ENCODE measurements at regions of chr5 and their contacts with region 1.

Region 1: GRCh38 chr5:90529194-90529938 is at the start of gene LYSMD3:
- DNase-seq: peak; percentile 98 to 99
- ATAC-seq: peak; percentile 99 to 100 (median 99)
- H3K4me3 ChIP-seq: peak within 1 kb of the TSS; percentile 82
- H3K27ac ChIP-seq: peak within 1 kb of the TSS; percentile 88
- H3K4me1 ChIP-seq: peaks cover 25% of the 10 kb centered on the region
- H3K27me3 ChIP-seq: no peaks in the 10 kb centered on the region
- CTCF ChIP-seq: no peak
- total RNA-seq, gene LYSMD3: 13.1 to 19.9 (median 16.8) TPM

Region 2: DNA sequence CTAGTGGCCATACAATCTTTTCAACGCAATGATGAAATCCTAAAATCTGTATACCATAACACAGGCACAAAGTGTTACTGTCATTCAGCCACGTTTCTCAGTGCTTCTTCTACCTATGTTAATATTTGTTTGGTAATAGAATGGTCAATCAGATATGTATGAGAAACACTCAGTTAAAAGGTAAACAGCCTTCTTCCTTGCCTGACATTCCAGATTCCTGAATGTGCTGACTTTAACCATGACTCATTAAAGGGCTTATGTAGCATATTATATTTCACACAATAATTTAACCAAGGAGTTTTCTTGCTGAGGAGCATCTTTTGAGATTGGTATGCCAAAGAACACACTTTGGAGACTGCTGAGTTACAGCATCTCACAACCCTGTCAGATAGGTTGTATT is 307.4 kb before region 1 on chr5:
- intact Hi-C with region 1: no loop called
- DNase-seq: no peak
- ATAC-seq: no peak
- H3K4me3 ChIP-seq: no peak overlapping the region
- H3K27ac ChIP-seq: no peak overlapping the region
- H3K4me1 ChIP-seq: no peaks in the 10 kb centered on the region
- H3K27me3 ChIP-seq: no peaks in the 10 kb centered on the region
- CTCF ChIP-seq: no peak

Region 3: GRCh38 chr5:90326995-90327394 is 202.4 kb before region 1 on chr5:
- intact Hi-C with region 1: no loop called
- DNase-seq: no peak
- ATAC-seq: no peak
- H3K4me3 ChIP-seq: no peak overlapping the region
- H3K27ac ChIP-seq: no peak overlapping the region
- H3K4me1 ChIP-seq: no peaks in the 10 kb centered on the region
- H3K27me3 ChIP-seq: no peaks in the 10 kb centered on the region
- CTCF ChIP-seq: no peak

Region 4: DNA sequence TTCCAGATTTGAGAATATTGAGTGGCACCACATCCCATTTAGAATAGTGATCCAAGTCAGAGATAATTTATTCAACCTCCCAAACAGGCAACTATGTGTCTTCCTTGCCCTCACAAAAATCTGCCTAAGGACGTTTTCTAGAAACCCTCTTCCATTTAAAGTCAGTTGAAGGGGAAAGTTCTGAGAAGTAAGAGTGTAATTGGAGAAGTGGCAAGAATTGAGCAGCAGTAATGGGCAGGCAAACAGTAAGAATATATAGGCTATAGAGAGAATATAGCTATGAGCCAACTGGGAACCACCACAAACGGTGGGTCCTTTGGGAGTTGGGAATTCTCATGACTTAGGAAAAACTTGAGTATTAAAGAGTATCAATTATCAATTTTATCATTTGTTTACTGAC is 88.7 kb before region 1 on chr5:
- intact Hi-C with region 1: loop called (anchors 2 kb)
- DNase-seq: no peak
- ATAC-seq: no peak
- H3K4me3 ChIP-seq: no peak overlapping the region
- H3K27ac ChIP-seq: no peak overlapping the region
- H3K4me1 ChIP-seq: no peaks in the 10 kb centered on the region
- H3K27me3 ChIP-seq: no peaks in the 10 kb centered on the region
- CTCF ChIP-seq: no peak

Region 5: DNA sequence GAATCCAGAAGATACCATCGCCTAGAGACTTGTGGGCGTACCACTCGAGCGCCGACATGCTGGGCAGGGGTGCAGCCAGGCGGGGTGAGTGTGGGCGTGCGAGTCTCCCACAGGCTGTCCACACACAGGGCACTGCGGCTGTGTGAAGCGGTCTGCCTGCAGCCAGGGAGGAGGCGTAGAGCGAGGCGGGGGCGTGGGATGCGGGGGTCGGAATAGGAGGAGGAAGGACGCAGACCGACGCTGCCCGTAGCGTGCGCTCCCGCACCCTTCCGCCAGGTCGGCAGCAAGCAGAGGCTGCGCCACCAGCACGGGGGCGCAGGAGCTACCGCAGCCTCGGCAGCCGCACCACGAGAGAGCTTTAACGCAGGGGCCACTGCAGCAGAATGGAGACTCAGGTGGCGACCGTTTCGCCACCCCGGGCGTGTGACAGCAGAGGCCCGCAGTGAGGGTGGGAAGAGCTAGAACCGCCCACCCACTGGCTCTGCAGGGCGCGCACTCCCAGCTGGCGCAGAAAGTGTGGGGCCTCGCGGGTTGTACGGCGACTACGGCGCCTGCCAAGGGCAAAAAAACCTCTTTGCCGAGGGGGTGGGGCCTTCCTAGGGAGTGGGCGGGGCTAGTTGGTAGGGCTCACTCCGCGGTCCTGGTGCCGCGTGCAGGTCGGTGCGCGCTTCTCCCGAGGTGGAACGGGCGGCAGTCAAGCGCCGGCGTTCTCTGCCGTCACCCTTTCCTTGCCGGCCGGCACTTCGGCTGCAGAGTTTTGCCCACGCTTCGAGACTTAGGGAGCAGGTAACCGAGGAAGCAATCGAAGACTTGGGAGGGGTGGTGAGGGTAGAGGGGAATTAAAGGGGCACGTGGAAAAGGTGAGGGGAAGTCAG is 54.9 kb before region 1 on chr5 and contains the starts of genes MBLAC2 and POLR3G:
- intact Hi-C with region 1: loop called (anchors 2 to 5 kb)
- DNase-seq: peak; percentile 92 to 97
- ATAC-seq: peak; percentile 96 to 98 (median 96)
- H3K4me3 ChIP-seq: peak within 1 kb of the TSS; percentile 86
- H3K27ac ChIP-seq: peak within 1 kb of the TSS; percentile 85
- H3K4me1 ChIP-seq: peaks cover 20% of the 10 kb centered on the region
- H3K27me3 ChIP-seq: no peaks in the 10 kb centered on the region
- CTCF ChIP-seq: peak; percentile 44
- total RNA-seq, gene MBLAC2: 2.2 to 2.9 (median 2.6) TPM
- total RNA-seq, gene POLR3G: 1.0 to 1.9 (median 1.7) TPM

Measured in psoas muscle (tissue), 8 donors.